ENCODE measurements at regions of chr1 and their contacts with region 1.

Region 1: DNA sequence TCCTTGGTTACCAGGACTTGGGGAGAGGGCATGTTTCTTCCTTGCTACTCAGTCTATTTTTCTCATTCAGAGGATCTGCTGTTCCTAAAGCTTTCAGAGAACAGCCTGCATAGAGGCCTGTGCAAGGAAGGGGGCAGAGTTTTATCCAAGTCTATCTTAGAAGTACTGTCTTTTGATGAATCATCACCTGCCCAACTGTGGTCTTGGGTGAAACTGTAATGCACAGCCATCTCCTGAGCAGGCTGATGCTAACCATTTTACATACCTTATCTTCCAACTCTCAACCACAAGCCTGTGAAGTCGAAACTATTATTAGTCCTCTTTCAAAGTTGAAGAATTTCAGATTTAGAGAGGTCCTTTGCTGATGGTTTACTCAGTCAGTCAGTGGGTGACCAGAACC is 368.0 kb downstream of the HHAT start:
- DNase-seq: no peak
- H3K4me3 ChIP-seq: no peak overlapping the region
- H3K27ac ChIP-seq: no peak overlapping the region
- H3K4me1 ChIP-seq: no peaks in the 10 kb centered on the region
- H3K27me3 ChIP-seq: no peaks in the 10 kb centered on the region
- CTCF ChIP-seq: no peak
- EP300 ChIP-seq: no peak
- POLR2A ChIP-seq: no peak

Region 2: DNA sequence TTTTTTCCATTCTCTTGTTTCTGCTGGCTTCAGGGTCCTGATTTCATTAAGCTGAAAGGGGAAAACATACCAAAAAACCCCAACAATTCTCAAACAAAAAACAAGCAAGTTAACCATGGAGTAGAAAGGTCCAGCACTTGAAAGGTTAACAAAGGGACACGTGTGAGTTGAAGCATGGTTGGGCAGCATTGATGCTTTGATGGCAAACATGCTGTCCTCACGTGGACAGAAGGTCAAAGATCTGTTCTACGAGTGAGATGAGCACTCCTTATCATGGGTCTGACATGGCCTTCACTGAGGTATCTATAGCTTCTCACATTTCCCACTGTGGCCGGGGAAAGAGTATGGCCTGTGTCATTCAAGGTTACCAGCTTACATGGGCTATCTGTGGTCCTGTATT is 26.9 kb after region 1 on chr1:
- in situ Hi-C with region 1: no loop called
- intact Hi-C with region 1: loop called (anchors 2 kb)
- DNase-seq: no peak
- H3K4me3 ChIP-seq: no peak overlapping the region
- H3K27ac ChIP-seq: no peak overlapping the region
- H3K4me1 ChIP-seq: no peaks in the 10 kb centered on the region
- H3K27me3 ChIP-seq: no peaks in the 10 kb centered on the region
- CTCF ChIP-seq: no peak
- EP300 ChIP-seq: no peak
- POLR2A ChIP-seq: no peak

Region 3: GRCh38 chr1:211613093-211613947 is 916.6 kb after region 1 on chr1:
- in situ Hi-C with region 1: no loop called
- intact Hi-C with region 1: no loop called
- DNase-seq: peak; percentile 85
- H3K4me3 ChIP-seq: no peak overlapping the region
- H3K27ac ChIP-seq: peak overlapping the region; percentile 41 to 58 (median 52)
- H3K4me1 ChIP-seq: peaks cover 0 to 18% (median 7%) of the 10 kb centered on the region in 4 donors
- H3K27me3 ChIP-seq: no peaks in the 10 kb centered on the region
- CTCF ChIP-seq: no peak
- EP300 ChIP-seq: no peak
- POLR2A ChIP-seq: no peak